Right ventricle myocardium inferior (tissue), 1 donor: ENCODE measurements at regions of chr9 and their contacts with region 1.

Region 1: DNA sequence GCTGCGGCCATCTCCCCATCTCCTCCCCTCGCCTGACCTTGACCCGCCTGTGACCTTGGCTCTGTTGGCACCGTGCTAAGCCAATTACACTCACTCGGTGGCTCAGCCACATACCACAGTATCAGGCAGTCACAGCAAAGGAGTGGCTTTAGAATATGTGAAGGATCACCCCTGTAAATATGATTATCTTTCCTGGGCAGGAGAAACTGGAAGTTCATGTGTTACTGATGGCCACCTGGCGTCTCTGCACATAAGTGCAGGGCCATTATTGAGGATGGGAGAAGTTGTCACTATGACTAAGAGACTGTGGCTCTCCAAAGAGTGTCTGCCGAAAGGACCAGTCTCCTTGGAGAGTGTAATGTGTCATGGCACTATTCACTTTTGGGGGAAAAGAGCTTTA is 116.9 kb upstream of the S1PR3 start:
- DNase-seq: no peak
- ATAC-seq: peak; percentile 61

Region 2: DNA sequence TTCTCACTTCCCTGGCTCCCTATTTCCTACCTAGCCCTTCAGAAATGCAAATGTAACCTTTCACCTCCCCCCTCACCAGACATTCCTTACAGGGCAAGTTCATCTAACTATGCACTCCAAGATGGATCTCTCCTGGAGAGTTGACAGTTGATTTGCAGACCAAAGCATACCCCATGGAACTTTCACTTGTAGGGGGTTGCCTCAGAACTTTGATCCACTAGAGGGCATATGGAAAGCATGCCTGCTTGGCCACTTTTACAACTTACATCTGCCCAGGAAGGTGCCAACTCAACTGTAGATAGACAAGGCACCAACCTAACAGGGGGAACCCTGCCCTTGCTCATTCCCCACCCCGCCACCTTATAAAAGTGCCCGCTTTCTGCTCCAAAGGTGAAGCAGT is 151.6 kb before region 1 on chr9:
- intact Hi-C with region 1: loop called (anchors 5 kb)
- DNase-seq: no peak
- ATAC-seq: no peak

Region 3: DNA sequence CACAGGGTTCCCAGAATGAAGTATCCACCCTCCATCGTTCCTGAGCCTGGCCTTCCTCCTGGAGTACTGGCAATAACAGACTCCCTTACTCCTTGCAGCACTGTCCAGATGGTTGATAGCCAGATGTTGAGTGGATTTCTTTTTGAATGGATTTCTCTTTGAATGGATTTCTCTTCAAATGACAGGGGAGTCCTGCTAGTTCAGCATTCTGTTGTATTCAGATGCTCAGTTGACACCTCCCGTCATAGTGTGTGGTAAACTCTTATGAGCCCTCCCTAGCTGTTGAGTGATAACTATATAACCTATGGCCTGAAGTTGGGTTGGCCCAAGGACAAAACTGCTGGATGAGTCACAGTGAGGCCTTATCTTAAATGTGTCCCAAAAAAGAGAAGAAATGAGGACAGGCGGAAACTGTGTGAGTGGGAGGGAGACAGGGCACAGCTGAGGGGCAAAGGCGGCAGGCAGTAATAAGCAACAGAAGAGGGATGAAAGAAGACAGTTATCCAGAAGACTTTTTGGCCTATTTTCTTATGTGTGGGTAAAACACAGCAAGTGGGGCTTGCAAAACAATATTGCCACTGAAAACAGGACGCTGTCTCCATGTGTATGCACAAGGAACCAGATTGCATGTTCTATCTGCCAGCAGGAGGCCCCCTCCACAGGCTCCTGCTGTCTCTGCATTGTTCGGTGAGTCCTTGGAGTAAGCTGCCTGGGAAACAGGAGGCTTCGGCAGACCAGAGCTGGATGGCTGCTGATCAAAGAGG is 92.6 kb before region 1 on chr9:
- intact Hi-C with region 1: loop called (anchors 5 kb)
- DNase-seq: no peak
- ATAC-seq: peak; percentile 79

Region 4: DNA sequence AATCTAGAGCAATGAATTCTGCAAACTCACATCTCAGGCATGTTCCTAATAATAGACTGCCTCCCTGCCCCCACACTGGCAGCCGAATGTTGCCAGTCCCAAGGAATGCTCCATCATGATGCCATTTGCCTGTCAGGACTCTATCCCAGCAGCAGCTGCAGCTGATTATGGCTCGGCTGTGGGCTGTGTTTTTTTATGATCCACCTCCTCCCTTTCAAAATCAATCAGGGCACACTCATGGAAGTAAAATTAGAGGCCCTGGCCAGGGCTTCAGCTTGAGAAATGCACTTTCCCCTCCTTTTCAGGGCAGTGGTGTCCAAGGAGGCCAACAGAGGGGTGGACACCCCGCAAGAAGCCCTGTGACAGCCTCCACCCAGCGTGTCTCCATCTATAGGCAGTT is 59.8 kb before region 1 on chr9:
- intact Hi-C with region 1: loop called (anchors 2 kb)
- DNase-seq: no peak
- ATAC-seq: peak; percentile 84

Region 5: GRCh38 chr9:88949425-88949824 is 75.0 kb after region 1 on chr9:
- intact Hi-C with region 1: loop called (anchors 5 kb)
- DNase-seq: no peak
- ATAC-seq: peak; percentile 87

Region 6: DNA sequence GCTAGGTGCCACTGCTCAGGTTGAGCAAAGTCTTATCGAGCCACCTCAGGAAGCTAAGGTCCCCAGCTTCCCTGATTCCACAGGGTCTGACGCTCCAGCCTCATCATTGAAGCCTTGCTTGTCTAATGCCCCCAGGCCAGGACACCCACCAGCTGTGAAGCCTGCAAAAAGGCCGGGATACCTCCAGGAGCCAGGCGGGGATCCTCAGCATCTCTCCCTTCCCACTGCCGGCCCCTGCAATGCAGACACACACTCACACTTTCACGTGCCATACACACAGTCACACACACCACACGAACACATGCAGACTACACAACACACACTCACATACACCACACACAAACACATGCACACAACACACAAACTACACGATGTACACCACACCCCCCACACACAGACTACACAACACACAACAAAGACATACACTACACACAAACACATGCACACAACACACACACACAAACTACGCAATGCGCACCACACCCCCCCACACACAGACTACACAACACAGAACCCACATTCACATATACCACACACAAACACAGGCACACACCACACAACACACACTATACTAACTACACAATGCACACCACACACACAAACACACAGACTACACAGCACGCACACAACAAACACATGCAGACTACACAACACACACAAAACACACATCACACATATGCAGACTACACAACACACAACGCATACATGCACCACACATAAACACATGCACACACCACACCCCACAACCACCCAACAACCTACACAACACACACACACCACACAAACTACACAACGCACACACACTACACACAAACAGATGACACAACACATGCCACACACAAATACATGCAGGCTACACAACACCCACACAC is 99.1 kb after region 1 on chr9:
- intact Hi-C with region 1: no loop called
- DNase-seq: no peak
- ATAC-seq: no peak

Region 7: GRCh38 chr9:88991066-88992034 is 117.0 kb after region 1 on chr9 and contains the start of gene S1PR3:
- intact Hi-C with region 1: loop called (anchors 2 kb)
- DNase-seq: peak; percentile 76
- ATAC-seq: peak; percentile 87
- total RNA-seq, gene S1PR3: 27.5 TPM

Region 8: DNA sequence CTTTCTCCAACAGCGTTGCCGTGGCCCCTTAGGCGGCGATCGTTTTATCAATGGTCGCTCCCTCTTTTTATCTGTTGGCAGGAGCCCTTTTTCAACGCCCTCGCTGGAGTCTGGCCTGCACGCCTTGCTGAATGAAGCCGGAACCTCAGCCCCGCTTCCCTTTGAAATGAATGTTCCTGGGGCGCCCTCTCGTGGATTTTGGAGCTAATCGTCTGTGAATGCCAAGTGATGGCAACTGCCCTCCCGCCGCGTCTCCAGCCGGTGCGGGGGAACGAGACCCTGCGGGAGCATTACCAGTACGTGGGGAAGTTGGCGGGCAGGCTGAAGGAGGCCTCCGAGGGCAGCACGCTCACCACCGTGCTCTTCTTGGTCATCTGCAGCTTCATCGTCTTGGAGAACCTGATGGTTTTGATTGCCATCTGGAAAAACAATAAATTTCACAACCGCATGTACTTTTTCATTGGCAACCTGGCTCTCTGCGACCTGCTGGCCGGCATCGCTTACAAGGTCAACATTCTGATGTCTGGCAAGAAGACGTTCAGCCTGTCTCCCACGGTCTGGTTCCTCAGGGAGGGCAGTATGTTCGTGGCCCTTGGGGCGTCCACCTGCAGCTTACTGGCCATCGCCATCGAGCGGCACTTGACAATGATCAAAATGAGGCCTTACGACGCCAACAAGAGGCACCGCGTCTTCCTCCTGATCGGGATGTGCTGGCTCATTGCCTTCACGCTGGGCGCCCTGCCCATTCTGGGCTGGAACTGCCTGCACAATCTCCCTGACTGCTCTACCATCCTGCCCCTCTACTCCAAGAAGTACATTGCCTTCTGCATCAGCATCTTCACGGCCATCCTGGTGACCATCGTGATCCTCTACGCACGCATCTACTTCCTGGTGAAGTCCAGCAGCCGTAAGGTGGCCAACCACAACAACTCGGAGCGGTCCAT is 126.9 kb after region 1 on chr9:
- intact Hi-C with region 1: loop called (anchors 2 kb)
- DNase-seq: peak; percentile 92
- ATAC-seq: peak; percentile 66